HEK293 (cell line): ENCODE measurements at regions of chr10 and their contacts with region 1.

Region 1: DNA sequence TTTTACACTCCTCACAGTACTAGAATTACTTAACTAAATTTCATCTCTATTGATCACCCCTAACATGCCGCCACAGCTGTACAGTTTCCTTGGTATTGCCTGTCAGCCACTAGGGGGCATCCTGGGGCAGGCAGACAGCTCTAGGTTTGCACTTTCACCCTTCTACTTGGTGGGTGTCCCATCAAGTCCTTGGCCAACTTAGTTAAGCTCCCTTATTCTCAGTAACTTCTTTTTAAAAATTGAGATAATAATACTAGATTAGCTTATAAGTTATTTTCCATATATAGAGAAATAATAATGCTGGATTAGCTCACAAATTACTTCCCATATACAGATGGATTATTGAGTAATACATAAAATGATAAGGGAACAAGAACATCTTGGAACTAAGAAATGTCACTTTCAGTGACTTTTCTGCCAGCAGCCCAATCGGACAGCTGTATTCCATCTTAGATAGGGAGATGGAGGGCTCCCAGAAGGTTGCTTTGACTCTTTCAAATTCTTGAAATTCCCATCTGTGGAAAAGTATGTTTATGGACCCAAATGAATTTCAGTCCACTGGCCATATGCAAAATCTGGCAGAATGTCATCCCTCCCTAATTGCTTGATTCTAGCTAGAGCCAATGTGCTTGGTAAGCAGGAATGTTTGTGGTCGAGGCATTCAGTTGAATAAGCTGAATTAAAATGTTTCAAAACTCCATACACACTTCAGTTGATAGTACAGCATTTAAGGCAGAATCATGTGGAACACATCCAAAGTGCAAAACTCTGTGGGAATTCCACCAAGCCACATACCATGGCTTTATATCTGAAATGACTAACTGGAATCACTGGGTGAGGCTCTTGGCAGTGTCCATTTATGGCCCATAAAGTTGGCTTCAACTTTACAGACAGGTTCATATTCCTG is 309.7 kb downstream of the CSTF2T start:
- H3K4me3 ChIP-seq: no peak overlapping the region
- H3K27ac ChIP-seq: no peak overlapping the region
- H3K4me1 ChIP-seq: peaks cover 3% of the 10 kb centered on the region; the same call in 1 of the 2 replicates
- CTCF ChIP-seq: no peak

Region 2: DNA sequence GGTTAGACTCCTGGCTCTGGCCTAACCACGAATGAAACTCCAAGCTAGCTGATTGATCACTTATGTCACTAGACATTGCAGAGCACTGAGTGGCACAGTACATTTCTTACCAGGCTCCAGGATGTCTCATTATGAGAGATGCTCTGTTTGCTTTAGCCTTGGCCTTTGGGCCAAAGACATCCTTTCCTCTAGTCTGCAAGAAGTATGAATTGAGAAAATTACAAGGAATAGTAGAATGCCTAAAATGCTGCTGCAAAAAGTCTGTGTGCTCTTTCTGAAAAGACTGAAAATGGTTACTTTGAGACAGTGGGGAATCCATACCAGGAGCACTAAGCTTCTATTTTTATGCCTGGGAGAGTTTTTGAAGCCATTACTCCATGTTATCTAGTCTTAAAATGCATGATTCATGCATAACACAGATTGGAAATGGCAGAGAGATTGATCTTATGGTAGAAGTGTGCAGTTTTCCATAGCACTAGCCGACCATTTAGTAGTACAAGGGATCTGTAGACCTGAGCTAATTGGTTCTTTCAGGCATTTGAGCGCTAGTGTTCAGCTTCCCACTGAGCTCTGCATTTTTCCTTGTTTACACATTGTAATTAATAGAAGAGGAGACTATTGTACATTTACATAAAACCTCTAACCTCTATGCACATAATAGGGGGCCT is 11.6 kb before region 1 on chr10:
- CTCF ChIA-PET with region 1: interaction called, 10 read pairs
- POLR2A ChIA-PET with region 1: no interaction called
- H3K4me3 ChIP-seq: no peak overlapping the region
- H3K27ac ChIP-seq: no peak overlapping the region
- H3K4me1 ChIP-seq: no peaks in the 10 kb centered on the region; the same call in 1 of the 2 replicates
- CTCF ChIP-seq: no peak